WTC11 (cell line): ENCODE measurements at regions of chr10 and their contacts with region 1.

Region 1: DNA sequence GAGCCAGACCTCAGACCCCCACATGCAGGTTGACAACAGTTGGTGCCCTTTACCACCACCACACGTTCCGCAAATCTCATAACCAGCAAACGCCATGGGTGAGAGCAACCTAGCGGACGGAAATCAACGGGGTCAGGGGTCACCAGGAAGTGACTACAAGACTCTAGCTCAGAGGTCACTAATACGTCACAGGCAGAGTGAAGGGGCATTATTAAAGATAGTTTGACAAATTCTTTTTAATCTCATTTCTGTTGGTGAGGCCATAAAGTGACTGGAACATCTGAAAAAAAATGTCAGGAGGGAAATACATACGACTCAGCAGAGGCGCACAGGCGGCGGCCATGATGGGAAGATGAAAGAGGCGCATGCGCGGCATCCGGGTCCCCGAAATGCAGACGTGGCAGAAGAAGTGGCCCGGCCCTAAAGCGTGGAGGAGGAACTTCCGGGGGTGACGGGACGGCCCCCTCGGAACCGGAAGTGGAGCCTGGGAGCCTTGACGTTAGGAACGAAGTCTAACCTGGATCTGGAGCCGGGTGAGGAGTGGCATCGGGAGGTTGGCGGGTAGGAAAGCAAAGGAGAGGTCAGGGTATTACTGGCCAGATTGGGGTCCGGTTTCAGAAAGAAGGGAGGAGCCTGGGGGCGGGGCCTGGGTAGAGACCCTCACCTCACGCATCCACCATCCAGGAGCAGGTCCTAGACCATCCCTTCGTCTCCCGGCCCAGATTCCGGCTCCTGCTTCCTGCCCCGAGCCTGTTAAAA is at the start of gene SEC24C:
- DNase-seq: peak; percentile 96
- ATAC-seq: peak; percentile 85
- H3K4me3 Mint-ChIP-seq: peak within 1 kb of the TSS; percentile 97
- H3K27ac Mint-ChIP-seq: peak within 1 kb of the TSS; percentile 99
- H3K4me1 Mint-ChIP-seq: peaks cover 30% of the 10 kb centered on the region
- H3K27me3 Mint-ChIP-seq: no peaks in the 10 kb centered on the region
- CTCF ChIP-seq: no peak
- total RNA-seq, gene SEC24C: 64.2 to 74.2 TPM (median 64.5 TPM) in 3 replicates

Region 2: GRCh38 chr10:73650537-73651331 is 93.3 kb before region 1 on chr10:
- CTCF ChIA-PET with region 1: no interaction called
- POLR2A ChIA-PET with region 1: no interaction called
- DNase-seq: no peak
- ATAC-seq: no peak
- H3K4me3 Mint-ChIP-seq: no peak overlapping the region
- H3K27ac Mint-ChIP-seq: no peak overlapping the region
- H3K4me1 Mint-ChIP-seq: peaks cover 16% of the 10 kb centered on the region
- H3K27me3 Mint-ChIP-seq: no peaks in the 10 kb centered on the region
- CTCF ChIP-seq: no peak

Region 3: GRCh38 chr10:73730153-73730906 is 13.8 kb before region 1 on chr10:
- CTCF ChIA-PET with region 1: interaction called, 5 read pairs
- POLR2A ChIA-PET with region 1: interaction called, 19 read pairs
- DNase-seq: peak; percentile 93
- ATAC-seq: peak; percentile 83
- H3K4me3 Mint-ChIP-seq: peak overlapping the region; percentile 95
- H3K27ac Mint-ChIP-seq: peak overlapping the region; percentile 97
- H3K4me1 Mint-ChIP-seq: 0 out of 2 replicates have a peak, but pooled peaks cover 2% of the 10 kb centered on the region
- H3K27me3 Mint-ChIP-seq: no peaks in the 10 kb centered on the region
- CTCF ChIP-seq: no peak